Activated naive CD4-positive, alpha-beta T cell treated with anti-CD3 and anti-CD28 coated beads for 36 hours (primary cell): ENCODE measurements at regions of chr11 and their contacts with region 1.

Region 1: DNA sequence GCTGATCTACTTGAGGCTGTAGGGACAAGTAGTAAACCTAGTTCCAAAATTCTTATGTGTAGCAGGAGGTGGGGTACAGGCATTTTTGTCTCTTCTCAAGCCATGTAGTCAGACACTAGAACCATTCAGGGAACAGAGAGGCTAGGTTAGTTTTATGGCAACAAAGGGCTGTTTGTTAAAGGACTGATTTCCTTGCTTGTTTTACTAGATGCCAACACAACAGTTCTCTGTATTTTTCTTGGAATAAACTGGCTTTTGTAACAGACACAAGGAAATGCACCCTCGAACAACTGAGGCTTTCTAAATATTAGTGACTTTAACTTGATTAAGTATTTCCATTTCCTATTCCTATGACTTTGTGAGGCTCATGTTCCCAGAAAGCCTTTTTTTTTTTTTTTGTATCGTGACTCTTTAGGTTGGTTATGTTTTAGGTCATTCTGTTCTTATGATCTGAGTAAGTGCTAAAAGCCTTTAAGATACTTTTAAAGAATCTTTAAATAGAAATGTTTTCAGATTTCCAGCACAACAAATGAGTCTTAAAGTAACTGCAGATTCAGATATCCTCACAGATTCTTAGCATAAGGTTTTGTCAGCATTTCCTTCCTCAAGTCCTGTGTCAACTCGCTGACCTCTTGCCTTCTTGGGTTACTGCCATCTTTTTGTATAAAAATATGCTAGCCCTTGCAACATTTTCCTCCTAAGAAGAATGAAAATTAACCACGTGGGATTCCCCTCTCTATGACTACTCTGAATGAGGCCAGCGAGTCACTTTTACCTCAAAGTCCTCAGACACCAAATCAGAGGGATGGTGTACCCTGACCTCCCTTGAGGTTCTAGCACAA is 92.5 kb downstream of the CCDC83 start:
- DNase-seq: peak; percentile 62
- H3K4me3 Mint-ChIP-seq: peak overlapping the region; percentile 1
- H3K27ac Mint-ChIP-seq: peak overlapping the region; percentile 87
- H3K4me1 Mint-ChIP-seq: peaks cover 46% of the 10 kb centered on the region
- H3K27me3 Mint-ChIP-seq: no peaks in the 10 kb centered on the region

Region 2: GRCh38 chr11:85752890-85753581 is 194.6 kb before region 1 on chr11:
- CTCF ChIA-PET with region 1: no interaction called
- intact Hi-C with region 1: loop called (anchors 1 kb)
- DNase-seq: peak; percentile 94
- H3K4me3 Mint-ChIP-seq: peak overlapping the region; percentile 57
- H3K27ac Mint-ChIP-seq: peak overlapping the region; percentile 97
- H3K4me1 Mint-ChIP-seq: peaks cover 95% of the 10 kb centered on the region
- H3K27me3 Mint-ChIP-seq: no peaks in the 10 kb centered on the region

Region 3: DNA sequence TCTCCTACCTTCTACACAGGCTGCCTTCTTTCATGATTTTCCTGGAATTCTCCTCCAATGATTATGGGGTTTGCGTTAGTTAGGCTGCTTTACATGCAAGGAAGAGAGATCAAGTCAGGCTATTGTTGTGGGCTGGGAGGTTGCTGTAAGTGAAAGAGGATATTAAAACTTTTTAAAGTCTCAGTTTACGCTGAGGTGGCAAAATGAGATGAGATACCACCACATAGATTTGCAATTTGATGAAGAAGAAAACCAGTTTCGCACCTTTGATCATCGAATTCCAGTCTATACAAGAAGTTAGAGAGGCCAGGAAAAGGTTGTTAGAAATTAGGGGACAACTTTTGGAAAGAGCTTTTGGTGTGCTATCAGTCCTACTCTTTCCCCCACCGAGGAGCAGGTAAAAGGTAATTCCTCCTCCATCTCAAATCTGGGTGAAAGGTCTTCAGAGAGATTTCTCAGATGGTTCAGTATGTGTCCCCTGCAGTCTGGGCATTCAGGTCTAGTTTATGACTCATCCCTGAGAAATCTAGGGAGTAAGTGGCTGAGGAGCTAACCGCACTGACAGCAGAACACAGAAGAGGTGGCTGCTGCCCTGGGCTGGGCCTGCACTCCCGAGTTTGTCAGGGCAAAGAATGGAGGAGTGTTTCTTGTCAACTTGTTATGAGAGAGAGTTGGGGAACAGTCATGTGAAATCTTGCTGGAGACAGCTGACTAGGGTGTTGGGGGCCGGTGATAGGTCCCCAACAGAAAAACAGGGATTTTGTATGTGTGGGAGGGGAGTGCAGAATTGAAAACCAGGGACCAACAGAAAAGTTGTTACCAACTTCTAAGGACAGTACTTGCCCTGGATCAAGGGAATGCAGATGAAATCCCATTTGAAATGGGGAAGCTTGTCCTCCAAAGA is 57.7 kb before region 1 on chr11:
- CTCF ChIA-PET with region 1: no interaction called
- intact Hi-C with region 1: no loop called
- DNase-seq: no peak
- H3K4me3 Mint-ChIP-seq: no peak overlapping the region
- H3K27ac Mint-ChIP-seq: no peak overlapping the region
- H3K4me1 Mint-ChIP-seq: no peaks in the 10 kb centered on the region
- H3K27me3 Mint-ChIP-seq: peaks cover 3% of the 10 kb centered on the region

Region 4: DNA sequence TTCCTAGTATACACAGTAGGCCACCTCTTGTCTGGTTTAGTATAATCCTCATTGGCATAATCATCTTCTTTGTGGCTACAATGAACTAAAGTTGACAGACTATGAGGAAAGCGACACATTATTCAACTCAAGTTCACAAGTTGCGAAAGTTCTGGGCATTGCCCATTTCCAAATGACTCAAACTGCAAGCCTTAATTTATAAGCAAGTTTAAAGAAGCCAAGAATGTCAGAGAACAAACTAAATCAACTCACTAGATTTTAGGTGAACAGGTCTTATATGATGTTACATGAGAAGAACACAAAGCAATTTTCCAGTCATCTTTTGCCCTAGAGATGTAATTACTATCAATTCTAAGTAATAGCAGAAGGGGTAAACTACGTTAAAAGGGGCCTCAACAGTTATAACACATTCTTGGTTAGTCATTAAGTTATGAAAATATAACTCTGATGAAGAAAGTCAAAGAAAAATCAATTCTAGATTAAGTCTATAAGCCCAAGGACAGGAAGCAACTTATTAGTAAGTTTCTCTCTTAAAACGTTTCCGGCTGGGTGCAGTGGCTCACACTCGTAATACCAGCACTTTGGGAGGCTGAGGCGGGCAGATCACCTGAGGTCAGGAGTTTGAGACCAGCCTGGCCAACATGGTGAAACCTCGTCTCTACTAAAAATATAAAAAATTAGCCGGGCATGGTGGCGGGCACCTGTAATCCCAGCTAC is 99.8 kb after region 1 on chr11:
- CTCF ChIA-PET with region 1: no interaction called
- intact Hi-C with region 1: loop called (anchors 1 kb)
- DNase-seq: peak; percentile 69
- H3K4me3 Mint-ChIP-seq: peak overlapping the region; percentile 43
- H3K27ac Mint-ChIP-seq: peak overlapping the region; percentile 93
- H3K4me1 Mint-ChIP-seq: peaks cover 92% of the 10 kb centered on the region
- H3K27me3 Mint-ChIP-seq: no peaks in the 10 kb centered on the region

Region 5: DNA sequence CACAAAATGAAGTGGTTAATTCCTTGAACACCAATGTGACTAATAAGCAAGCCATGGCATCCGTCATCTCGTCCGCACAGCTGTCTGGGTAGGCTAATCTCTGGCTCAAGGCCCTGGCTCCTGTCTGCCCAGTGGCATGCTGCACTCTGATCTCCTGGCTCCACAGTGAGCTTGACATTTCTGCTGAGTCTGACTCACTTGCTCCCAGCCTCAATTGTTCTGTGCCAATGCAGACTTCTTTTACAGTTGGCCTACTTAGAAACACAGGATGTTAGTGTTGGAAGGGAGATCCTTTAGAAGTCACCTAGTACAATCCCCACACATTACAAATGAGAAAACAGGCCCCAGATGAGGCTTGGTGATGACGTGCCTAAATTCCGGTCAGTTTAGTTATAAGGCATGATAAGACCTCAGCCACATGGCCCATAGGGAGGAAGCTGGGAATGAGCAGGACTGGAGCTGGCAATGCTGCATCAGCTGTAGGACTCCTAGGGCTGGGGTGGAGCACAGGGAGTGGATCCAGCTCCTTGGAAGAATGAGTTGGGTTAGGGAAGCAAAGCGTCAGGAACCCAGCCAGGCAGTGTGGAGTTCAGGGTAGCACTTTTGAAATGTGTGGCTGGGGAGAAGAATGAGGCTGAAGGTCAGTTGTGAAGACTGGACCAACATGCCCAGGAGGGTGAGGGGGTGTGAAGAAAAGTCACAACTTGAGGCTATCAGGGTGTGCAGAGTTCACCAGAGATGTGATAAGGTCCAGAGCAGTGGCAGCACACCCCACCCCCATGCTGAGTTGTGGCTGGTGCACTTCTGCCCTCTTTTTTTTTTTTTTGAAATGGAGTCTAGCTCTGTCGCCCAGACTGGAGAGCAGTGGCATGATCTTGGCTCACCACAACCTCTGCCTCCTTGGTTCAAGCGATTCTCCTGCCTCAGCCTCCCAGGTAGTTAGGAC is 226.7 kb after region 1 on chr11:
- CTCF ChIA-PET with region 1: no interaction called
- intact Hi-C with region 1: loop called (anchors 1 kb)
- DNase-seq: no peak
- H3K4me3 Mint-ChIP-seq: no peak overlapping the region
- H3K27ac Mint-ChIP-seq: no peak overlapping the region
- H3K4me1 Mint-ChIP-seq: peaks cover 20% of the 10 kb centered on the region
- H3K27me3 Mint-ChIP-seq: no peaks in the 10 kb centered on the region

Region 6: GRCh38 chr11:86244522-86245368 is 297.1 kb after region 1 on chr11 and contains the start of gene EED:
- CTCF ChIA-PET with region 1: no interaction called
- intact Hi-C with region 1: loop called (anchors 1 kb)
- DNase-seq: peak; percentile 94
- H3K4me3 Mint-ChIP-seq: no peak within 1 kb of the TSS
- H3K27ac Mint-ChIP-seq: no peak within 1 kb of the TSS
- H3K4me1 Mint-ChIP-seq: peaks cover 35% of the 10 kb centered on the region
- H3K27me3 Mint-ChIP-seq: no peaks in the 10 kb centered on the region
- total RNA-seq, gene EED: 60.4 to 61.0 TPM

Region 7: GRCh38 chr11:86802601-86803051 is 855.0 kb after region 1 on chr11:
- CTCF ChIA-PET with region 1: no interaction called
- intact Hi-C with region 1: loop called (anchors 2 kb)
- DNase-seq: peak; percentile 38
- H3K4me3 Mint-ChIP-seq: no peak overlapping the region
- H3K27ac Mint-ChIP-seq: no peak overlapping the region
- H3K4me1 Mint-ChIP-seq: peaks cover 53% of the 10 kb centered on the region
- H3K27me3 Mint-ChIP-seq: peaks cover 46% of the 10 kb centered on the region